ENCODE measurements at regions of chr3 and their contacts with region 1.

Region 1: DNA sequence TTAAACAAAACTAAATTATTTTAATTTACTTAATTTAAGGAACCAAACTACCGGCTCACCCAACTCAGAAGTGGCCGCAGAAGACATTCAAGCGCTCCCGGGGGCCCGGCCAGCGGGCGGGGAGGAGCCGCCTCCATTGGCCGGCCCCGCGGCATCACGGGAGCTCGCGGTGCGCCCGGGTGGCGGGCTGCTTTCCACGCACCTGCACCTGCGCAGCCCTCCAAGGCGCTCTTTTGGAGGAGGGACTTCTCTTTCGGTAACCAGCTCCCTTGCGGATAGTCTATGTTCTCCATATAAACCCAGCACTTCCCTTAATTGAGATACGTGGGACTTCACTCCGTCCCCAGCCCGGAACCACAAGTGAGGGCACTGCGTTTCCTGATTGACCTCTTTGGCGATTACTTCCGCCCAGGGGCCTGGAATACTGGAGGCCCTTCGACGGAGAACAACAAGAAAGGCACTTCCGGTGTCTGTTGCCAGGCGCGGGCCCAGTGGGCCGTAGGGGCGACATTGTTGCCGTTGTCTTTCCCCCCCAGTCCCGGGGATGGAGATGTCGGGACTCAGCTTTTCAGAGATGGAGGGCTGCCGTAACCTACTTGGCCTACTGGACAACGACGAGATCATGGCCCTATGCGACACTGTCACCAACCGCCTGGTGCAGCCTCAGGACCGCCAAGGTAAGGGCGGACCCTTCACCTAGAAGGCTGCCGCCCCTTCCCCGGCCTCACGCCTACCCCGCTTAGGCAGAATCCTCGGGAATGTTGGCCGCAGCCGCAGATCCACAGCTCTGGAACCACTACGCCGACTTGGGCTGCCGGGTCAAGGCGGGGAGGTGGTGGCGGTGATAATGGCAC is at the start of gene C3orf38:
- DNase-seq: peak; percentile 90
- ATAC-seq: peak; percentile 89
- H3K4me3 ChIP-seq: peak within 1 kb of the TSS; percentile 95 to 98
- H3K27ac ChIP-seq: peak within 1 kb of the TSS; percentile 98
- H3K4me1 ChIP-seq: peaks cover 2 to 21% of the 10 kb centered on the region in 2 experiments; a peak in 3 of 4 replicates
- H3K27me3 ChIP-seq: no peaks in the 10 kb centered on the region
- CTCF ChIP-seq: no peak
- POLR2A ChIP-seq: peak; percentile 5
- RAD21 ChIP-seq: no peak
- total RNA-seq, gene C3orf38: 18.6 TPM

Region 2: GRCh38 chr3:88058591-88059368 is 91.0 kb before region 1 on chr3 and contains the starts of genes CGGBP1 and ZNF654:
- CTCF ChIA-PET with region 1: no interaction called
- POLR2A ChIA-PET with region 1: no interaction called
- RAD21 ChIA-PET with region 1: no interaction called
- intact Hi-C with region 1: loop called (anchors 2 kb)
- DNase-seq: peak; percentile 97
- ATAC-seq: peak; percentile 95
- H3K4me3 ChIP-seq: peak within 1 kb of the TSS; percentile 90 to 92
- H3K27ac ChIP-seq: peak within 1 kb of the TSS; percentile 86
- H3K4me1 ChIP-seq: peaks cover 0 to 15% of the 10 kb centered on the region in 2 experiments; a peak in 2 of 4 replicates
- H3K27me3 ChIP-seq: no peaks in the 10 kb centered on the region
- CTCF ChIP-seq: no peak
- POLR2A ChIP-seq: peak; percentile 45
- RAD21 ChIP-seq: no peak
- total RNA-seq, gene CGGBP1: 52.7 TPM
- total RNA-seq, gene ZNF654: 7.0 TPM

Region 3: GRCh38 chr3:88180398-88180999 is 30.8 kb after region 1 on chr3:
- CTCF ChIA-PET with region 1: no interaction called
- POLR2A ChIA-PET with region 1: no interaction called
- RAD21 ChIA-PET with region 1: no interaction called
- intact Hi-C with region 1: no loop called
- DNase-seq: peak; percentile 10
- ATAC-seq: 0 out of 2 replicates have a peak, but pooled peaks have one; percentile 44
- H3K4me3 ChIP-seq: no peak overlapping the region
- H3K27ac ChIP-seq: no peak overlapping the region
- H3K4me1 ChIP-seq: no peaks in the 10 kb centered on the region
- H3K27me3 ChIP-seq: no peaks in the 10 kb centered on the region
- CTCF ChIP-seq: peak in 2 of 3 experiments; percentile 25 to 49; a peak in 3 of 6 replicates
- POLR2A ChIP-seq: no peak
- RAD21 ChIP-seq: peak; percentile 43